A549 (cell line): ENCODE measurements at regions of chr14 and their contacts with region 1.

Region 1: GRCh38 chr14:85576848-85577542 is 47.1 kb downstream of the FLRT2 start:
- DNase-seq: no peak
- ATAC-seq: no peak
- H3K4me3 ChIP-seq: no peak overlapping the region
- H3K27ac ChIP-seq: no peak overlapping the region
- H3K4me1 ChIP-seq: peaks cover 16% of the 10 kb centered on the region; the same call in 2 of the 3 replicates
- CTCF ChIP-seq: no peak
- EP300 ChIP-seq: no peak
- POLR2A ChIP-seq: no peak
- RAD21 ChIP-seq: no peak

Region 2: DNA sequence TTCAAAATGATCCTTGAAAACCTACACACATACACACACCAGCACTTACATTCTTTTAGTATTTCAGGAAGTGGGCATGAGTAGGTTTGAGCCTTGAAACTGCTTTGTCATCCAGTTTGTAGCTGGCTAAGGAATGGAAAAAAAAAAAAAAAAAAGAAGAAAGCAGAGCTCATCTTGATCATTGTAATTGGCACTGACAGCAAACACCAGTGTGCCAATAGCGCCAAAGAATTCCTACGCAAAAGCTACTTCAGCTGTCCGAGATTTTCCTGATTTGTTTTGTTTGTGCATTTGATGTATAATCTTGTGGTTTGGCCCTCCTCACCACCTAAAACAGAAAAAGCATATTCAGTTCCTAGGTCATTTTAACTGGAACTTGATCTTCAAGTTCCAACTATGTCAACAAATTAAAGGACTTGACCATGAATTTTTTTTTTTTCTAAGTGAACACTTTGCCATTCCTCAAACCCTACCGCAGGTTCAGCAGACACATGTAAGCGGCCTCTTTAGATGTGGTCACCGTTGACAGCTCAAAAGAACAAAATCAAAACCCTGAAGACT is 10.2 kb after region 1 on chr14:
- CTCF ChIA-PET with region 1: interaction called, 12 read pairs
- POLR2A ChIA-PET with region 1: no interaction called
- DNase-seq: peak in 1 of 2 experiments; percentile 46
- ATAC-seq: peak in 1 of 2 experiments; percentile 59; a peak in 3 of 6 replicates
- H3K4me3 ChIP-seq: no peak overlapping the region
- H3K27ac ChIP-seq: peak overlapping the region in 1 of 2 experiments; percentile 59; a peak in 3 of 6 replicates
- H3K4me1 ChIP-seq: 0 out of 3 replicates have a peak, but pooled peaks cover 5% of the 10 kb centered on the region
- CTCF ChIP-seq: no peak
- EP300 ChIP-seq: no peak
- POLR2A ChIP-seq: no peak
- RAD21 ChIP-seq: no peak

Region 3: DNA sequence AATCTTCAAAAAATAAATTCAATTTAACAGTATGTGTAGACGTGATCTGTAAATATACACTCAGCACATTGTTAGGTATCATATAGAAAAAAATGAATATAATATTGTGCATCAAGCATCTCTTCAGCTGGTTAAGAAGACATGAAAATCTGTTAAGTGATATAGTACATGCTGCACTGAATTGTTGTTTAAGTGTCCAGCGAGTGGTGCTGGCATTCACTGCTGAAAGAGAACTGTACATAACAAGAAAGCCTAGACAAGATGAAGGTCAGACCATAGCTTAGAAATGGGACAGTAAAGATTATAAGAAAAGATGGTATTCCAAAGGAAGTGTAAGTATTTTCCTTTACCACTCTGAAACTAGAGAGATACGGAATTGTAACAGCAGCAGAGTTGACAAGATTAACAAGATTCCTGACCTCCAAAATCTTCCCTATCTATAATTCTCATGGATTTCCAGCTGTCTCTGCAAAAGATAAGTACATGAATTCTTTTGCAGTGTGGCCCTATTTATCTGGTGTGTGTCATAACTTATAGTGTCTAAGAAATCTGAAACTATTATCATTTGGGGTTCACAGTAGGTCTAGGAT is 151.6 kb after region 1 on chr14:
- CTCF ChIA-PET with region 1: no interaction called
- POLR2A ChIA-PET with region 1: no interaction called
- DNase-seq: no peak
- ATAC-seq: no peak
- H3K4me3 ChIP-seq: no peak overlapping the region
- H3K27ac ChIP-seq: no peak overlapping the region
- H3K4me1 ChIP-seq: no peaks in the 10 kb centered on the region
- CTCF ChIP-seq: no peak
- EP300 ChIP-seq: no peak
- POLR2A ChIP-seq: no peak
- RAD21 ChIP-seq: no peak